Activated CD4-positive, alpha-beta T cell treated with anti-CD3 and anti-CD28 coated beads for 36 hours (primary cell): ENCODE measurements at regions of chr6 and their contacts with region 1.

Region 1: GRCh38 chr6:157274471-157275226 is 48.7 kb downstream of the TMEM242 start:
- DNase-seq: peak; percentile 89
- ATAC-seq: peak; percentile 93
- H3K4me3 Mint-ChIP-seq: peak overlapping the region; percentile 73
- H3K27ac Mint-ChIP-seq: peak overlapping the region; percentile 83
- H3K4me1 Mint-ChIP-seq: peaks cover 9% of the 10 kb centered on the region
- H3K27me3 Mint-ChIP-seq: no peaks in the 10 kb centered on the region

Region 2: DNA sequence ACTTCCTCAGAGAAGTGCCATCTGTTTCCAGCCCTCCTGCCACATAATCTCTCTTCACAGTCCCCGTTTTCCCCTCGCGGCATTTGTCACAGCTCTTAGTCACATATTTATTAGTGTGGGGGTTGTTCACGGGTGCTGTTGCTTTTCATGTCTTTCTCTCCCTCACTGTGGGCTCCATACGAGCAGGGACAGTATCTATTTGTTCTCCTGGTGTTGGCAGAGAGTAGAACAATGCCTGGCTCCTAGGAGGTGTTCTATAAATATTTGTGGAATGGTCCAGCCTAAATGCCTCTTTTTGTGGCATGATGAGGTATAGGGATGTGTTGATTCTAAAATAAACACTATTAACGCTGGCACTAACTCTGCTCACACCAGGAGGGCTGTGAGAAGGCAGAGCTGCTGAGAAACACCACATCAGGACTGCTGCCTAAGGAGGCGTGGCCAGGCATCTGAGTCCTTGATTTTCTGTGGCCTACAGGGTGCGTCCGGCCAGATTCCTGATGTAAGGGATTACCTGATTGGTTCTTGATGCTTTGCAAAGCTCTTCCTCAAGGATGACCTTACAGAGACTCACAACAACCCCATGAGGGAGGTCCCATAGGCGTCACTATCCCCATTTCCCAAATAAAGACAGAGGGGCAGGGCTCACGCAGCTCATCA is 717.3 kb before region 1 on chr6:
- CTCF ChIA-PET with region 1: no interaction called
- POLR2A ChIA-PET with region 1: no interaction called
- intact Hi-C with region 1: loop called in 1 of 2 experiments (anchors 10 kb)
- DNase-seq: no peak
- ATAC-seq: no peak
- H3K4me3 Mint-ChIP-seq: no peak overlapping the region
- H3K27ac Mint-ChIP-seq: no peak overlapping the region
- H3K4me1 Mint-ChIP-seq: no peaks in the 10 kb centered on the region
- H3K27me3 Mint-ChIP-seq: no peaks in the 10 kb centered on the region

Region 3: DNA sequence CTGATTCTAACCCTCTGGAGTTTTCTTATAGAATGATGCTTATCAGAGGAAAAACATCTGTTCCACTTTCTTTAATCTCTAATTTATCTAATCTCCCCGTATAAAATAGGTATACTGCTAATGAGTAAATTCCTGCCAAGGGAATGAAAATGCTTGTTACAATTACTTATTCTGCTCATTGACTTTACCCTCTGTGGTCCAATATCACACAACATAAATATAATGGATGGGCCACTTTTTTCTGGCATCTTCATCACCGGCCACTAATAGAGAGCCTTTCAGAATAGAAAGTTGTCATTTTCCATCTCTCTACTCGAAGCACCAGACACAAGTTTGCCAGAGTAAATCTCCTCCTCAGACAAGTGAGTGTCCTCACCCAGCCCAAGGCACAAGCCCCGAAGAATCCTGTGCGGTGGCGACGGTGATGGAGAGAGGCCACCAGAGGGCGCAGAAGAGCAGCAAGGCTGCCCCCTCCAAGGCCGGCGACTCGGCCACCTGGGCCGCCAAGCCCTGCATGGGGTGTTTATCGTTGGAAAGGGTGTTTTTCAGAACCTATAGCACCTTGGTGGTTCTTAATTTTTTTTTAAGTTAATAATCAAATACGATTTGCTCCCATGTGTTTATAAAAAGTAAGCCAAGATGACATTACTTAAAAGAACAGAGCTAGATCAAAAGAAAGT is 710.4 kb before region 1 on chr6:
- CTCF ChIA-PET with region 1: no interaction called
- POLR2A ChIA-PET with region 1: interaction called, 4 read pairs
- intact Hi-C with region 1: loop called (anchors 1 to 10 kb)
- DNase-seq: peak; percentile 89
- ATAC-seq: peak; percentile 98
- H3K4me3 Mint-ChIP-seq: no peak overlapping the region
- H3K27ac Mint-ChIP-seq: no peak overlapping the region
- H3K4me1 Mint-ChIP-seq: peaks cover 7% of the 10 kb centered on the region
- H3K27me3 Mint-ChIP-seq: peaks cover 3% of the 10 kb centered on the region

Region 4: DNA sequence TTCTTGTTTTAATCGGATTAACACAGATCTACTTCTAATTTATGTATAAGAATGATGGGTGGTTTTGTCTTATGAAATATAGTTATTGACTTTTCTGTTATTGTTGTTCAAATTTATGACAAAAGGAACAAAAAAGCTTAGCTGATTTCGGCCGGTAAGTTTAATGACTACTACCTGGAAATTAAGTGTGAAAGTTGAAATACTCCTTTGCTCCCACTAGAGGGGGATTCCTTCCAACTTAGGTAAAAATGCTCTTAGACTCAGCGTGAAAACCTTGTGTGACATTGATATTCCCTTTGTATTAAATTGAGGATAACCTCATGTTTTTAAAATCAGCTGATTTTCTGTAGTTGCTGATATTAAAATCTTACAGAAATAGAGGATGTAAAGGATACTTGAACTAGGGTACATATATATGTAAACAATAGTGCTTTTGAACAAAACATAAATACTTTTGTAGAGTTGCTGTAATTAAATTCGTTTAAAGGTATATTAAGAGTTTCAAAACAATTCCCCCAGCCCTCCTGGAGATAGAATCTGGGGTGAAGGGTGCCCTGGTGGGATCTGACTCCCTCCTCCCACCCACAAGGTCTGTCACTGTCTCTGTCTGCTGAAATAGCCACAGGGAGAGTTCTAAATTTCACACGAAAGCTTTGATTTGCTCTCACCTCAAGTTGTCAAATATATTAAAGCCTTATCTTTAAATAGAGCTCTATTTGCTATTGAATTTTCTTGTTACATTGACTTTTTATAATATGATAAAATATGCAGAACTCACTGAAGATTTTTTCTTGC is 240.0 kb before region 1 on chr6:
- CTCF ChIA-PET with region 1: interaction called, 4 read pairs
- POLR2A ChIA-PET with region 1: no interaction called
- intact Hi-C with region 1: loop called (anchors 1 to 5 kb)
- DNase-seq: no peak
- ATAC-seq: peak; percentile 59
- H3K4me3 Mint-ChIP-seq: peak overlapping the region; percentile 49
- H3K27ac Mint-ChIP-seq: peak overlapping the region; percentile 52
- H3K4me1 Mint-ChIP-seq: peaks cover 29% of the 10 kb centered on the region
- H3K27me3 Mint-ChIP-seq: no peaks in the 10 kb centered on the region

Region 5: DNA sequence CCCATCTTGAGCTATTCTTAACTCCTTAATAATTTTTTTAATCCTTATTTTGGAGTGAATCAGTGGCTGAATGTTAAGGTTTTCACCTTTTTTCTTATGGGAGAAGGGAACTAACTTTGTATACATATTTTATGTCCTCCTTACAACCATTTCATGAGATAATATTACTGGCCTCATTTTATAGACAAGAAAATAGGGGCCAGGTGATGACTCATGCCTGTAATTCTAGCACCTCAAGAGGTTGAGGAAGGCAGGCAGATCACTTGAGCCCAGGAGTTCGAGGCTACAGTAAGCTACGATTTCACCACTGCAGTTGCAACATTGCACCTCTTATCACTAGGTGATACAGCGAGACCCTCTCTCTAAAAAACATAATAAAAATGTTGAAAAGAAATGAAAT is 80.0 kb before region 1 on chr6:
- CTCF ChIA-PET with region 1: no interaction called
- POLR2A ChIA-PET with region 1: no interaction called
- intact Hi-C with region 1: loop called in 1 of 2 experiments (anchors 2 kb)
- DNase-seq: no peak
- ATAC-seq: no peak
- H3K4me3 Mint-ChIP-seq: no peak overlapping the region
- H3K27ac Mint-ChIP-seq: no peak overlapping the region
- H3K4me1 Mint-ChIP-seq: peaks cover 16% of the 10 kb centered on the region
- H3K27me3 Mint-ChIP-seq: no peaks in the 10 kb centered on the region

Region 6: DNA sequence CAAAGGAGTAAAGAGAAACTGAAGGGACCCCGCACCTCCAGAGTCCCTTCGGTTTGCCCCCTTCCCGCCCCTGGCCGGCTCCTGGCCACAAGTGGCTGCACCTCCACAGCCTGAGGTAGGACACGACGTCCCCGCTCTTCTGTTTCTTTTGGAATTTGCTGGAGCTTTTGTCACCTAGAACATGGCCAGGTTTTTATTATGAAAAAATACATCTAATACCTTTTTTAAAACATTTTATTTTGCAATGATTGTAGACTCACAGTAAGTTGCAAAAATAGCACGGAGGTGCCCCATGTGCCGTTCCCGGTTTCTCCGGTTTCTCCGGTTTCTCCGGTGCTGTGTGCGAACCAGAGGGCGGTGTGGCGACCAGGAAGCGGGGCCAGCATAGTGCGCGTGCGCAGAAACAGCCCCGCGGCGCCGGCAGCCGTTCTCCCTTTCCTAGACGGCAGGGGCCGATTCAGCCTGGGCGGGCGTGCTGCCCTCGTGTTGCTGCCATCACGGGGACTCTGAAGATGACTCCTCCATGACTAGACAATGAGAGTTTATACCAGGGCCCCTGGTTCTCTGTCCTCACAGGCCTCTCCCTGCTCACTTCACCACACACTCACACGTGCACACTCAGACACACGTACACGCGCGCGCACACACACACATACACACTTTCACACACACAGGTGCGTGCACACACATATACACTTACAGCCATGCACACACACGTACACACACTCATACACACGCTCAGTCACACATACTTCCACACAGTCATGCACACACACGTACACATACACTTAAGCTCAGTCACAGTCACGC is 53.4 kb before region 1 on chr6:
- CTCF ChIA-PET with region 1: no interaction called
- POLR2A ChIA-PET with region 1: no interaction called
- intact Hi-C with region 1: loop called in 1 of 2 experiments (anchors 1 kb)
- DNase-seq: peak; percentile 93
- ATAC-seq: peak; percentile 92
- H3K4me3 Mint-ChIP-seq: peak overlapping the region; percentile 75
- H3K27ac Mint-ChIP-seq: peak overlapping the region; percentile 91
- H3K4me1 Mint-ChIP-seq: peaks cover 38% of the 10 kb centered on the region
- H3K27me3 Mint-ChIP-seq: no peaks in the 10 kb centered on the region

Region 7: GRCh38 chr6:157235600-157236039 is 39.0 kb before region 1 on chr6:
- CTCF ChIA-PET with region 1: interaction called, 15 read pairs
- POLR2A ChIA-PET with region 1: no interaction called
- intact Hi-C with region 1: loop called (anchors 2 to 5 kb)
- DNase-seq: peak; percentile 78
- ATAC-seq: peak; percentile 93
- H3K4me3 Mint-ChIP-seq: peak overlapping the region; percentile 80
- H3K27ac Mint-ChIP-seq: peak overlapping the region; percentile 30
- H3K4me1 Mint-ChIP-seq: peaks cover 16% of the 10 kb centered on the region
- H3K27me3 Mint-ChIP-seq: peaks cover 29% of the 10 kb centered on the region

Region 8: DNA sequence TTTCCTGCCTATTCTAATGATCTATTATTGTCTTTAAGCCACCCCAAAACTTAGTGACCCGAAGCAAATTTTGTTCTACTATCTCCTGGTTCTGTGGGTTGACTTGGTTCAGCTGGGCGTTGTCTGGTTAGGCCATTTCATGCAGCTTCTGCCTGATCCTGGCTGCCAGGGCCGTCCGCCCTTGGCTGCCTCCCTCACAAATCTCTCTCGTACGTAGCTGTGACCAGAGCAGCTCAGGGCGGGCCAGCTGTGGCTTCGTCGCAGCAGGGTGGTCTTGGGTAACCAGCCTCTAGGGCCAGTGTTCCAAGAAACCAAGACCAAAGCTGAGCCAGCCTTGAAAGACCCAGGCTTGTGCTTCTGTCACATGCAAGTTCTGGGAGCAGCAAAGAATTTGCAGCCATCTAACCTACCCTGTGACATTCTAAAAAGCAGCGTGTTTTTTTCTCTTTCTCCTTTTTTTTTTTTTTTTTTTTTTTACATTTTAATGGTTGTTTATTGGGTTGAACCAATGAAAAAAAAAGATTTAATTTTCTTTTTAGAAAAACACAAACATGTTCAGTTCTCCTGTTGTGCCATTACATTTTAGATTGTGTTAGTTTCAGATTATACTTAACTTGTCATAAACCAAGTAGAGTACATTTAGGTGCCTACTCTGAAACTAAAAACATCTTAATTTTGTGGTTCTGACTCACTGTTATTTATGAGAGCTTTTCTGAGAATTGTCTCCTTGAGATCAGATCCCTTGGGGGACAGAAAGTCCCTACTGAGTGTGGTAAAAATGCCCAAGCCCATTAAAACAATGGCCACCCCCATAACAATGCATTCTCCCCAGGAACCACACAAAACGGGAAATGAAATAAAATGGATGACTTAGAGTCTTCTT is 190.2 kb after region 1 on chr6:
- CTCF ChIA-PET with region 1: no interaction called
- POLR2A ChIA-PET with region 1: no interaction called
- intact Hi-C with region 1: no loop called
- DNase-seq: no peak
- ATAC-seq: peak; percentile 59
- H3K4me3 Mint-ChIP-seq: no peak overlapping the region
- H3K27ac Mint-ChIP-seq: peak overlapping the region; percentile 83
- H3K4me1 Mint-ChIP-seq: peaks cover 34% of the 10 kb centered on the region
- H3K27me3 Mint-ChIP-seq: no peaks in the 10 kb centered on the region